HEK293 (cell line): ENCODE measurements at regions of chr1 and their contacts with region 1.

Region 1: GRCh38 chr1:225777583-225778336 is at the start of gene SRP9:
- H3K4me3 ChIP-seq: peak within 1 kb of the TSS; percentile 76
- H3K27ac ChIP-seq: peak within 1 kb of the TSS; percentile 95
- H3K4me1 ChIP-seq: peaks cover 12% of the 10 kb centered on the region
- CTCF ChIP-seq: peak; percentile 100

Region 2: DNA sequence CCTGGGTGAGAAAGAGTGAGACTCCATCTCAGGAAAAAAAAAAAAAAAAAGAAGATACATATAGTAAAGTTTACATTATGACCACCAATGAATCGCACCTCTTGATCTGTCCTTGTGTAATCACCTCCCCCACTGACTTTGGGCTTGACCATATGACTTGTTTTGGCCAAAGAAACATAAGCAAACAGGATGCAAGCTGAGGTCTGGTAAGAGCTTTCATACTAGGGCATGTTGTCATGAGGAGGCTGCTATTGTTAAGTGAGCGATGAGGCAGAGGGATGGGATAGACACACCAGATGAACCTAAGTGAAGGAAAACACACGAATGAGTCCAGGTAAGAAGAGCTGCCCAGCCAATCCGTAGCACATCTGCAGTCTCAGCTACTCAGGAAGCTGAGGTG is 135.6 kb before region 1 on chr1:
- CTCF ChIA-PET with region 1: interaction called, 14 read pairs
- POLR2A ChIA-PET with region 1: interaction called, 3 read pairs
- H3K4me3 ChIP-seq: no peak overlapping the region
- H3K27ac ChIP-seq: no peak overlapping the region
- H3K4me1 ChIP-seq: no peaks in the 10 kb centered on the region
- CTCF ChIP-seq: no peak

Region 3: DNA sequence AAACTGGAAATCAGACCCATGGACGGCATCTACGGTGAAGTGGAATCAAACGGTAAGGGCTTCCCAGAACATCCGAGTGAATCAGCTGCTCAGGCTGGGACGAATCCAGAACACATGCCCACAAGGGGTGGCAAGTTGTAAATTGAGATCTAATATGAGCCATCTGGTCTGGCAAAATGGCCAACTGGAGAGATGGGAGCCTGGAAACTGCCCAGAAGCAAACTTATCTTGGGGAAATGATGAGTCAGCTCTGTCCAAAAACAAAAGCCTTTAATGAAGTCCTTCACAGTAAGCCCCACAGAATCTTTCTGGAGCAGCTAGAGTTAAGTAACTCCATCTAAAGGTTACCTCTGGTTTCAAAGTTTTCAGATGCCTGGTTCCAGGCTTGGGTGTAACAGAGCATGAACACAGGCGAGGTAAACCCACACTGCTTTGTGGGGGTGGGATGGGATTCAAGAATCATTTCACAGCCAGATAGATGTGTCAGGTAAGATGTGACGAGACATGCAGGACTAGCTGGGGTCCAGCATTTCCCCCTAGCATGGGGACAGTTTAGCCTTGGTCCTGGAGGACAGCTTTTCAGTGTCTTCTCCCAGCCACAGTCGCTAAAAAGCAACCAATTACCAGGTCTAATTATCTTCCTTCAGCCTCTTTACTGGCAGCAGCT is 10.7 kb before region 1 on chr1:
- CTCF ChIA-PET with region 1: interaction called, 47 read pairs
- POLR2A ChIA-PET with region 1: interaction called, 38 read pairs
- H3K4me3 ChIP-seq: no peak overlapping the region
- H3K27ac ChIP-seq: peak overlapping the region; percentile 29; the same call in 1 of the 2 replicates
- H3K4me1 ChIP-seq: peaks cover 37% of the 10 kb centered on the region
- CTCF ChIP-seq: no peak

Region 4: GRCh38 chr1:225809842-225810578 is 32.2 kb after region 1 on chr1 and contains the start of gene EPHX1:
- CTCF ChIA-PET with region 1: interaction called, 22 read pairs
- POLR2A ChIA-PET with region 1: interaction called, 46 read pairs
- H3K4me3 ChIP-seq: peak within 1 kb of the TSS; percentile 64
- H3K27ac ChIP-seq: peak within 1 kb of the TSS; percentile 61
- H3K4me1 ChIP-seq: peaks cover 20% of the 10 kb centered on the region
- CTCF ChIP-seq: peak; percentile 88

Region 5: DNA sequence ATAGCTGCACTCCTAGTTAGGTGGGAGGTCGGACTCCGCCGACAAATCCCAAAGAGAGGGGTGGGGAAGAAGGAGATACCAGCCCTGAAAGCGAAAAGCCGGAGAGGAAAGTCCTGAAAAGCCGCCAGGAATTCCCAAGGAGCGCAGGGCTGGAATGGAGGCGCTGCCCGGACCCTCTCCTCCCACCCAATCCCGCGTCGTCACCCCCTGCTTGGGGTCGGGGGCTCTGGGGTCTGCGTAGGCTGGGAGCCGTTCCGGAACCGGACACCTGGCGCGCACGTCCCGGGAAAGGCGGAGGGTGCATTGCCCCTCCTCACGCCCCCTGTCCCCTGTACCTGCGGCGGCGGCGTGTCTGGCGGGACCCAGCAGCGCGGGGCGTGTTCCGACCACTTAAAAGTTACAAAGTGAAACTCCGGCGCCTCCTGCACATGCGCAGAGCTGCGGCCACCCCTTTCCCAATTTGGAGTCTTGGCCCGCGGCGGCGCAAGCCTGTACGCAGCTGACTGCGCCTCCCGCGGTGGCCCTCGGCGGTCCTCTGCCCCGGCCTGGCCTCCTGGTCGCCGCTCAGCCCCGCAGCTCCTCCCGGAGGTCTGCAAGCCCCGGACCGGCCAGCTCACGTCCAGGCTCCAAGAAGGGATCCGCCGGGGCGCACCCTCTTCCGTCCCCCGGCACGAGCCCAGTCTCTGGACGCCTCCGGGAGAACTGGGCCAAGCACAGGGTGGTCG is 104.4 kb after region 1 on chr1 and contains the start of gene TMEM63A:
- CTCF ChIA-PET with region 1: interaction called, 6 read pairs
- POLR2A ChIA-PET with region 1: interaction called, 12 read pairs
- H3K4me3 ChIP-seq: peak within 1 kb of the TSS; percentile 86
- H3K27ac ChIP-seq: peak within 1 kb of the TSS; percentile 76
- H3K4me1 ChIP-seq: no peaks in the 10 kb centered on the region; the same call in 1 of the 2 replicates
- CTCF ChIP-seq: peak; percentile 98

Region 6: GRCh38 chr1:225896937-225897549 is 119.3 kb after region 1 on chr1:
- CTCF ChIA-PET with region 1: no interaction called
- POLR2A ChIA-PET with region 1: no interaction called
- H3K4me3 ChIP-seq: no peak overlapping the region
- H3K27ac ChIP-seq: no peak overlapping the region
- H3K4me1 ChIP-seq: no peaks in the 10 kb centered on the region; the same call in 1 of the 2 replicates
- CTCF ChIP-seq: no peak

Region 7: DNA sequence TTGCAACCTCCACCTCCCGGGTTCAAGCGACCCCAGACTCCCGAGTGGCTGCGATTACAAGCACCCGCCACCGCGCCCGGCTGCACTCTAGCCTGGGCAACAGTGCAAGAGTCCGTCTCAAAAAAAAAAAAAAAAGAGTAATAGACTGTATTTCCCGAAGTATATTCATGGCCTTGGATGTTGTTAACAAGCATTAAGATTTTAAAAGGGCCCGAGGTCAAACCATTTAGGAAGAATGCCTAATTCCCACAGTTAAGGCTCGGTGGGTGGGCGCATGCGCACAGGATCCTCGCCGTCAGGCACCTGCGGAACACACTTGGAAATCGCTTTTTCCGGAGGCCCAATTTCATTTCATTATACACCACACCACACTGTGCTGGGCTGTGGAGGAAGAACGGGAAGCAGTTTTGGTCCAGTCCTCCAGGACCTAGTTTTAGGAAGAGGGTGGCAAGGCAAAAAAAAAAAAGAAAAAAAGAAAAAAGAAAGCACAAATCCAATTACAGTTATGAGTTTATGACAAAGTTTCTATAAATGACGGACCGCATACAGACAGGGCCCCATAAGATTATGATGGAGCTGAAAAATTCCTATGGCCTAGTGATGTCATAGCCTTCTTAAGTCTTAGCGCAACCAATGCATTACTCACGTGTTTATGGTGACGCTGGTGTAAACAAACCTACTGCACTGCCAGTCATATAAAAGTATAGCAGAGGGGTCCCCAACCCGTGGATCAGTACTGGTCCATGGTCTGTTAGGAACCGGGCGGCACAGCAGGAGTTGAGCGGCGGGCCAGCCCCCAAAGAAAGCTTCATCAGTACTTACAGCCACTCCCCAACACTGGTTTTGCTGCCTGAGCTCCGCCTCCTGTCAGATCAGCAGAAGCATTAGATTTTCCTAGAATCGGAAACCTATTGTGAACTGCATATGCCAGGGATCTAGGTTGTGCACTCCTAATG is 323.0 kb after region 1 on chr1:
- CTCF ChIA-PET with region 1: no interaction called
- POLR2A ChIA-PET with region 1: no interaction called
- H3K4me3 ChIP-seq: no peak overlapping the region
- H3K27ac ChIP-seq: no peak overlapping the region
- H3K4me1 ChIP-seq: no peaks in the 10 kb centered on the region
- CTCF ChIP-seq: no peak; the same call in 1 of the 2 replicates

Region 8: DNA sequence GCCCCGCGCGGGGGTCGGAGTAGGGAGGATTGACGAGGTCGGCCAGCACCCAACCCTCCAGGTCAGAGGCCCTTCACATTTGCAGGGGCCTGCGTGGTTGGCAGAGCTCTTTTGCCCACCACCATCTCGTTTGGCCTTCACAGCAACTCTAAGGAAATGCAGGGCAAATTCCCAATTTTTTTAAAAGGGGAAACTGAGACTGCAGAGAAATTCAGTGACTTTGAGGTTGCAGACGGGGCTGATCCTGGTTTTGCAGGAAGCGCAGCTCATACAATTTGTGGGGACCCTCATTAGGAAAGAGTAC is 409.2 kb after region 1 on chr1:
- CTCF ChIA-PET with region 1: no interaction called
- POLR2A ChIA-PET with region 1: no interaction called
- H3K4me3 ChIP-seq: peak overlapping the region; percentile 74
- H3K27ac ChIP-seq: peak overlapping the region; percentile 93; the same call in 1 of the 2 replicates
- H3K4me1 ChIP-seq: peaks cover 13% of the 10 kb centered on the region
- CTCF ChIP-seq: no peak